ENCODE measurements at regions of chr6 and their contacts with region 1.

Region 1: GRCh38 chr6:131923356-131923755 is 27.8 kb downstream of the CCN2 start:
- DNase-seq: no peak
- ATAC-seq: peak; percentile 95
- H3K4me3 ChIP-seq: no peak overlapping the region
- H3K27ac ChIP-seq: no peak overlapping the region
- H3K4me1 ChIP-seq: no peaks in the 10 kb centered on the region
- H3K27me3 ChIP-seq: no peaks in the 10 kb centered on the region
- CTCF ChIP-seq: peak; percentile 75

Region 2: DNA sequence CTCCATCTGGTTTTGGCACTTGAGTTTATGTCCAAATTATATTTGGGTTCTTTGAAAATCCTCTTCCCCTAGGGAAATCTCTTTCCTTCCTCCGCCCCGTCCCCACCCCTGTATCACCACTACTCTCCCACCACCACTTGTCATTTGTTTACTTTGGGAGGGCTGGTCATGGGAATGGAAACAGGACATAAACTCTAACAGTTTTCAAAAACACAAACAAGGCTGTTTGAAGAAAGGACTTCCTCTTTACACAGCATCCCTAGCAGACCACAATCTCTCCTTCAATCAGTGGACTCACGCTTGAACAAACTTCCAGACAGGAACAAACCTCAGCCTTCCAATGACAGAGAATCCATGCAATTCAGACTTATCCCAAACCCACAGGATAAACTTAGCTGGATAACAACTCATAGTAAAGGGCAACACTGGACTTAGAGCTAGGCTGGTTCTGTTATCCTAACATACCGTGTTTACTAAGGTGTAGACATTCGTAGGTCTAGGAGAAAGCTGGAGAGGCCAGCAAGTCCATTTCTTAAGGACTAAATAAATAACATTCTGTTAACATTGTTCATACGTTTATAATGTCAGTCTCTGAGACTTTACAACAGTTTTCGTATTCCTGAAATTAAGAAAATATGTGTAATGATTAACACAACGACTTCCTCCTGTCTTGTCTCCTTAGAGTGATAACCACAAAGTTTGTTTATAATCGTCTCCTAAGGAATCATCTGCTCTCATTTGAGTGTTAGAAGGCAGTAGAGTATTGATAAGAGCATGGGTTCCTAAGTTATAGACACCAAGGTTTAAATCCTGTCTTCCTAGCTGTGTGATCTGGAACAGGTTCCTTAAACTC is 168.4 kb before region 1 on chr6:
- intact Hi-C with region 1: no loop called
- DNase-seq: no peak
- ATAC-seq: no peak
- H3K4me3 ChIP-seq: no peak overlapping the region
- H3K27ac ChIP-seq: no peak overlapping the region
- H3K4me1 ChIP-seq: no peaks in the 10 kb centered on the region
- H3K27me3 ChIP-seq: no peaks in the 10 kb centered on the region
- CTCF ChIP-seq: no peak

Region 3: GRCh38 chr6:132161283-132161682 is 237.9 kb after region 1 on chr6:
- intact Hi-C with region 1: loop called (anchors 10 kb)
- DNase-seq: no peak
- ATAC-seq: peak; percentile 81
- H3K4me3 ChIP-seq: no peak overlapping the region
- H3K27ac ChIP-seq: no peak overlapping the region
- H3K4me1 ChIP-seq: no peaks in the 10 kb centered on the region
- H3K27me3 ChIP-seq: no peaks in the 10 kb centered on the region
- CTCF ChIP-seq: peak; percentile 60

Region 4: DNA sequence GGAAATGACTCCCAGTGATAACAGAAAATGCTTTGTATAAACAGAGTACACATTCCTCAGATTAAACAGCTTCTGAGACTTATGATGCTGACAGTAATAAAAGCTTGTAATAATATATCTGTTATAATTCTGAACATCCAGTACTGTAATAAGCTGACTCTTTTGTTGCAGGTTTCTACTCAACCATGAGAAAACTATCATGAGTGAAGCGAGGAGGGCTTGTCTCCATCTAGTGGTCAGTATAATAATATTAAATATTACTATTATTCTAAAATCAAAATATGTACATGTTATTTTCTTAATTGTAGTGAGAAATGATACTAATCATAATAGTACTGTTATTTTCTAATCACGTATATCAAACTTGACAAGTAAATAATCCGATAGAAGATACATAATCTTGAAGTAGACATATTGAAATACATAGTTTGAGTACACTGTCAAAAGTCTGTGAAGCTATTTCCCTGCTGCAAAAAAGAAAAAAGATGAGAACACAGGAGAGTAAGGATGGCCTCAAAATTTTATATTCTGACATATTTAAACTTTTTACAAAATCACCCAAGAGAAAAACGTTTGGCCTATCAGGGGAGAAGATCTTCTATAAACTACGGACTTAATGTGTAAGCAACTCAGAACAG is 294.8 kb after region 1 on chr6:
- intact Hi-C with region 1: loop called (anchors 10 kb)
- DNase-seq: no peak
- ATAC-seq: peak; percentile 52
- H3K4me3 ChIP-seq: no peak overlapping the region
- H3K27ac ChIP-seq: no peak overlapping the region
- H3K4me1 ChIP-seq: no peaks in the 10 kb centered on the region
- H3K27me3 ChIP-seq: no peaks in the 10 kb centered on the region
- CTCF ChIP-seq: peak; percentile 60

Measured in upper lobe of right lung (tissue), 1 donor.